K562 (cell line): ENCODE measurements at regions of chr22 and their contacts with region 1.

Region 1: DNA sequence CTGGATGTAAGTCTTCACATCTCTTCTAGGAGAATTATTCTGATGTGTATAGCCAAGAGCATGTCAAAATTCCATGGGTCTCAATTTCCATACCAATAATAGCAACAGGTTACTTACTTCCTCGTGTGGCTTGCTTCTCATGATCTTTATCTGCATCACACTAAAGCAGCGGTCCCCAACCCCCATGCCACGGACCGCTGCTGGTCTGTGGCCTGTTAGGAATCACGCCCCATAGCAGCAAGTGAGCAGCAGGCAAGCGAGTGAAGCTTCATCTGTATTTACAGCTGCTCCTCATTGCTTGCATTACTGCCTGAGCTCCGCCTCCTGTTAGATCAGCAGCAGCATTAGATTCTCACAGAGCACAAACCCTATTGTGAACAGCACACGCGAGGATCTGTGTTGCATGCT is 28.9 kb upstream of the SLC25A1 start:
- DNase-seq: no peak
- ATAC-seq: no peak
- H3K4me3 ChIP-seq: no peak overlapping the region
- H3K27ac ChIP-seq: no peak overlapping the region
- H3K4me1 ChIP-seq: peaks cover 4 to 10% of the 10 kb centered on the region in 2 experiments
- H3K27me3 ChIP-seq: peaks cover 48 to 56% of the 10 kb centered on the region in 2 experiments
- CTCF ChIP-seq: no peak
- EP300 ChIP-seq: no peak
- POLR2A ChIP-seq: no peak
- RAD21 ChIP-seq: 0 out of 4 replicates have a peak, but pooled peaks of 1 of the 2 experiments have one; percentile 14

Region 2: DNA sequence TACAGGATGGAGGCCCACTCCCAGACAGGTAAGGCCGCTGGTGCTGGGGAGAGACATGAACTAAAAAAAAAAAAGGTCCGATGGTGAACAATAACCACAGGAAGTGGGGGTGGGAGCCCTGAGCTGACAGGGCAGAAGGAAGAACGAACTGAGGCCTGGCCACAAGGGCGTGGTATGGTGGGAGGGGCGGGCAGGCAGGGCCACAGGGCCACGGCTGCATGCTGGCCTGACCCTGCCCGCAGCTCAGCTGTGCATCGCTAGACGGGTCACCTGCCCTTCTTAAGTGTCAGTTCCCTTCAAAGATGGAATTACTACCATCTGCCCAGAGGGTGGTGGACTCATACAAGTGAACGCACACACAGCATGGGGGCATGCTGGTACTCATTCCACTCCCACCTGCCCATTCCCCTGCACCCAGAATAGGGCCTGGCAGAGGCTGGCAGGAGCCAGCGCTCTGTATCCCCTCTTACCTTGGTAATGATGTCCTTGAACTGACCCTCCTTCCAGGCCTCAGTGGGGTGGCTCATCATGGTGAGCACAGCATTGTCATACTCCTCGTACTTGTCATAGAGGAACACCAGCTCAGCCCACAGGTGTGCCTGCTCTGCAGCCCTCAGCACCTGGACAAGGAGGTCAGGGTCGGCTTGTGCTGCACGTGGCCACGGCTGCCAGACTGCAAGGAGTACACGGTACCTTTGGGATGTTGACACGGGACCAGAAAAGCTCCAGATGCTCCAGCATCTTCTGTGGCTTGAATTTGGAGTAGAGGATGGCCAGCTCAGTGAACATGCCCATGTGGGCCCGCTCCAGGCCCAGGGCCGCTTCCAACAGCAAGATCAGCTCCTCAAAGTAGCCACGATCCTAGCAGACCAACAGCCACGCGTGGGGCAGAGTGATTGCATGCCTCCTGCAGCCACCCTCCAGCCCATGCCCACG is 11.3 kb before region 1 on chr22:
- CTCF ChIA-PET with region 1: interaction called, 3 read pairs
- POLR2A ChIA-PET with region 1: interaction called, 11 read pairs
- in situ Hi-C with region 1: no loop called
- intact Hi-C with region 1: no loop called
- DNase-seq: peak; percentile 61 to 76 (median 74)
- ATAC-seq: peak; percentile 22
- H3K4me3 ChIP-seq: no peak overlapping the region
- H3K27ac ChIP-seq: no peak overlapping the region
- H3K4me1 ChIP-seq: peaks cover 3 to 7% of the 10 kb centered on the region in 2 experiments; a peak in 4 of 5 replicates
- H3K27me3 ChIP-seq: peaks cover 66 to 82% of the 10 kb centered on the region in 2 experiments
- CTCF ChIP-seq: no peak
- EP300 ChIP-seq: no peak
- POLR2A ChIP-seq: no peak
- RAD21 ChIP-seq: 0 out of 4 replicates have a peak, but pooled peaks of 1 of the 2 experiments have one; percentile 3